K562 (cell line): ENCODE measurements at regions of chr1 and their contacts with region 1.

Region 1: DNA sequence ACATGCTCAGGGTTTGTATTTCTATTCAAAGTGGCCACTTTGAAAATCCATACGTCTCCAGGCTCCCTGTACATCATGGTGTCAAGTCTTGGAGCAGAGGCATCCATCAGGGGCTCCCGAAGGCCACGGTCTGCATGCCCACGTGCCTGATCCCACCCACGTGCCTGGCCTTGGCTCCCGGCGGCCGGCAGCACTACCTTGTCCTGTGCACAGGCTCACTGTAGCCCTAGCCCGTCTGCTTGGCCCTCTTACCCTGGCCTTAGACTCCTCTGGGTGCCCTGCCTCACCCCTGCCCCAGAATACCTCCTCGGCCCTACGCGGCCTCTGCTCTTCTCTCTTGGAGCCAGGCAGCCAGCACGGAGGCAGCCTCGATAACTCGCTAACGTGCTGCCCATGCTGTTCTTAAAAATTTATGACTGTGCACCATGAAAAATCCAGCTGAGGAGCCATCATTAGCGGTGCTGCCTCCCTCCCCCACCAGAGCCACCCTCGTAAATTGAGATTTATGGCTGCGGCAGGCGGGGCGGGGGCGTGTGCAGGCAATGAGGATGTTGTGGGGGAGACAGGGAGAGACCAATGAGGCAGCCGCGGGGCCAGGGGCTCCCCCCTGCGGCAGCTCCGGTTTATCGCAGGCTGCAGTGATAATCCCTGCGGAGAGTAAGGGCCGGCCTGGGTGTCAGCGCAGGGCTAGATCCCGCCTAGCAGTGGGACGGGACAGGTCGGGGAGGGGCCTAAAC is 24.6 kb downstream of the DMAP1 start:
- DNase-seq: peak; percentile 92 to 97 (median 96)
- ATAC-seq: peak; percentile 99
- H3K4me3 ChIP-seq: no peak overlapping the region
- H3K27ac ChIP-seq: no peak overlapping the region
- H3K4me1 ChIP-seq: peaks cover 25 to 35% of the 10 kb centered on the region in 2 experiments; a peak in 4 of 5 replicates
- H3K27me3 ChIP-seq: no peaks in the 10 kb centered on the region
- CTCF ChIP-seq: peak; percentile 92 to 97 (median 94)
- EP300 ChIP-seq: peak; percentile 25; the same call in 1 of the 2 replicates
- POLR2A ChIP-seq: no peak
- RAD21 ChIP-seq: peak in 1 of 2 experiments; percentile 67; a peak in 2 of 4 replicates

Region 2: DNA sequence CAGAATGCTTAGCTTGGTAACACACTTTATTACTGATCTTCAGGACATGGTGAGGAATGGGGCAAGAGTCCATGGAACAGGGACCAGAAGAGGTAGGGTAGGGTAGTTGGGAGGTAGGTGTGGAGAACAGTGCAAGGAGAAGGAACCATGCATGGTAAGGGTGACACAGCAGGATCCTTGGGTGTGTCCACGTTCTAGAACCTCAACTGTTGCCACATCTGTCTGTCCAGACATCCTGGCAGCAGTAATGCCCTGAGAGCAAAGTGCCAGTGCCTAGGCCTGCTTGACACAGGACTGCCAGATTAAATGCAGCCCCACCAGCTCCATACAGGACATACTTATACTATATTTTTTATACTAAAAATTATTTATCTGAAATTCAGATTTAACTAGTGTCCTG is 10.7 kb before region 1 on chr1:
- CTCF ChIA-PET with region 1: no interaction called
- POLR2A ChIA-PET with region 1: interaction called, 14 read pairs
- in situ Hi-C with region 1: no loop called
- intact Hi-C with region 1: no loop called
- DNase-seq: peak; percentile 40 to 69 (median 62)
- ATAC-seq: peak; percentile 81
- H3K4me3 ChIP-seq: no peak overlapping the region
- H3K27ac ChIP-seq: peak overlapping the region; percentile 49; the same call in 1 of the 3 replicates
- H3K4me1 ChIP-seq: peaks cover 7 to 10% of the 10 kb centered on the region in 2 experiments; a peak in 3 of 5 replicates
- H3K27me3 ChIP-seq: no peaks in the 10 kb centered on the region
- CTCF ChIP-seq: no peak
- EP300 ChIP-seq: peak; percentile 31; the same call in 1 of the 2 replicates
- POLR2A ChIP-seq: no peak
- RAD21 ChIP-seq: no peak